Activated naive CD4-positive, alpha-beta T cell treated with anti-CD3 and anti-CD28 coated beads for 36 hours (primary cell): ENCODE measurements at regions of chr12 and their contacts with region 1.

Region 1: GRCh38 chr12:40152783-40153383 is 47.0 kb upstream of the SLC2A13 start:
- DNase-seq: peak; percentile 68
- H3K4me3 Mint-ChIP-seq: no peak overlapping the region
- H3K27ac Mint-ChIP-seq: no peak overlapping the region
- H3K4me1 Mint-ChIP-seq: no peaks in the 10 kb centered on the region
- H3K27me3 Mint-ChIP-seq: peaks cover 16% of the 10 kb centered on the region

Region 2: DNA sequence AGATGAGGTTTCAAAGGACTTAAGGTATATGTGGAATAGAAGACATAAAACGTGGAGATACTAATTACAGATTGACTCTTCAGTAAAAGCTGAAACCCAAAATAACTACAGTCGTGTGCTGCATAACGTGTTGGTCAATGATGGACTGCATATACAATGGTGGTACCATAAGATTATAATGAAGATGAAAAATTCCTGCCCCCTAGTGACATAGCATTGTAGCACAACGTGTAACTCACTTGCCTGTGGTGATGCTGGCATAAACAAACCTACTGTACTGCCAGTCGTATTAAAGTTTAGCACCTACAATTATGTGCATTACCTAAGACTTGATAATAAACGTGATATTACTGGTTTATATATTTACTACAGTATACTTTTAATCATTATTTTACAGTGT is 222.2 kb after region 1 on chr12:
- CTCF ChIA-PET with region 1: no interaction called
- intact Hi-C with region 1: loop called (anchors 10 kb)
- DNase-seq: no peak
- H3K4me3 Mint-ChIP-seq: no peak overlapping the region
- H3K27ac Mint-ChIP-seq: no peak overlapping the region
- H3K4me1 Mint-ChIP-seq: no peaks in the 10 kb centered on the region
- H3K27me3 Mint-ChIP-seq: no peaks in the 10 kb centered on the region

Region 3: DNA sequence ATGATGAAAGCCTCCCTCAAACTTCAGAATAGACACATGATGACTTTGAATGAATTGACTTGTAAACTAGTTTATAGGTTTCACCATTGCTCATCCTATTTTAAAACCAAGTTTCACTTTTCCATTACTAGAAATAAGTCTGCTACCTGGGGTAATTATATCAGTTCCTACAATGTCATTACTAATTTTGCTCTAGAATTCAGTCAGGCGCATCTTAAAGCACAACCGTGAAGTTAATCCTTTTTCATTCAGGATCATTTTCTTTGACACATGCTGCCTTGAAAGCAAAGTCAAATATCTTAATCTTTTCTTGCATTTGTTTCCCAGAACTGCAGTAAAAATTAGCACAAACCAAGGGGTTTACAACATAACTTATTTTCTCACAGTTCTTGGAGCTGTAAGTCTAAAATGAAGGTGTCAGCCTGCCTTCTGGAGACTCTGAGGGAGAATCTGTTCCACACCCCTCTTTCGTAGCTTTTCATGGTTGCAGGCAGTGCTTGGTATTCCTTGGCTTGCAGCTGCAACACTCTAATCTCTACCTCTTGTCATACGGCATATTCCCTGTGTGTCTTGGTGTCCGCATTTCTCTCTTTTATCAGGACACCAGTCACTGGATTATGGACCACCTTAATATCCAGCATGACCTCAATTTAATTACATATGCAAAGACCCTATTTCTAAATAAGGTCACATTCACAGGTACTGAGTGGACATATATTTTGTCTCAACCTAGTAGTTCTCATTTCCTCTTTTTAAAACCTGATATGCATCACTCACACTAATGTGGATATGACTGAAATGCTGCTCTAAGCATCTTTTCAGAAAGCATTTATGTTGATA is 921.0 kb after region 1 on chr12:
- CTCF ChIA-PET with region 1: no interaction called
- intact Hi-C with region 1: no loop called
- DNase-seq: no peak
- H3K4me3 Mint-ChIP-seq: no peak overlapping the region
- H3K27ac Mint-ChIP-seq: no peak overlapping the region
- H3K4me1 Mint-ChIP-seq: no peaks in the 10 kb centered on the region
- H3K27me3 Mint-ChIP-seq: no peaks in the 10 kb centered on the region